Common myeloid progenitor, CD34-positive (primary cell): ENCODE measurements at regions of chr12 and their contacts with region 1.

Region 1: GRCh38 chr12:92516277-92516600 is 186.6 kb upstream of the PLEKHG7 start:
- DNase-seq: no peak
- H3K4me3 ChIP-seq: no peak overlapping the region
- H3K27ac ChIP-seq: no peak overlapping the region
- H3K4me1 ChIP-seq: no peaks in the 10 kb centered on the region
- H3K27me3 ChIP-seq: no peaks in the 10 kb centered on the region

Region 2: GRCh38 chr12:92505254-92506231 is 10.7 kb before region 1 on chr12:
- CTCF ChIA-PET with region 1: interaction called, 13 read pairs
- POLR2A ChIA-PET with region 1: no interaction called
- DNase-seq: peak; percentile 44 to 79 (median 71)
- H3K4me3 ChIP-seq: peak overlapping the region in 6 of 7 experiments; percentile 13 to 60 (median 46)
- H3K27ac ChIP-seq: peak overlapping the region; percentile 46 to 71
- H3K4me1 ChIP-seq: peaks cover 6 to 17% (median 14%) of the 10 kb centered on the region in 4 experiments
- H3K27me3 ChIP-seq: no peaks in the 10 kb centered on the region

Region 3: DNA sequence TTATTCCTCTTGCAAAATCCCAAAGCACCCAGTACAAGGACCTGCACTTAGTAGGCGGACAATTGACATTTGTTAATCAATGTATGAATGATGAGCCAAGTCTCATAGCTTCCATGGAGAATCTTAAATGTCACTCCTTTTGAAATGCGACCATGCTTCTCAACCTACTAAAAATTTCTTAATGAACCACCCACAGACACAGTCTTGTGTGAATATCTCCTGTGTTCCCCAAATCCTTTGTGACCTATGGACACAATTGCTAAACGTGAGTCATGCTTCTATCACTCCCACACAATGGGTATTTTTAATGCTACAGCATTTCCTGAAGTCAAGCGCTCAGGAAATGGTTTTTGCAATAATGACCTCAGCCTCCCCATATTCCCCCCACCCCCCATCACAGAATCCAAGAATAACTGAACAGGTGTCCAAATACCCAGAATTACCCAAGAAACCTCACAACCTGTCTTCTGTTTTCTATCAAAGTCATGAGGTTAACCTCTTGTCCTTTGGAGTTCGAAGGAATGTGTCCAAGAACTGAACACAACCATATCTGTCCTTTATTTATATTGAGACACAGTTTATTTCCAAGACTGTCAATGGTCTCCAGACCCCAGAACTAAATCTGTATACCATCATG is 23.0 kb after region 1 on chr12:
- CTCF ChIA-PET with region 1: no interaction called
- POLR2A ChIA-PET with region 1: no interaction called
- DNase-seq: peak; percentile 76 to 89 (median 83)
- H3K4me3 ChIP-seq: peak overlapping the region in 1 of 7 experiments; percentile 9
- H3K27ac ChIP-seq: peak overlapping the region in 1 of 2 experiments; percentile 26
- H3K4me1 ChIP-seq: peaks cover 24 to 68% (median 55%) of the 10 kb centered on the region in 4 experiments
- H3K27me3 ChIP-seq: no peaks in the 10 kb centered on the region